ENCODE measurements at regions of chr19 and their contacts with region 1.

Region 1: GRCh38 chr19:18588611-18589379 is at the start of gene REX1BD:
- DNase-seq: peak; percentile 81 to 94 (median 88)
- ATAC-seq: peak; percentile 74 to 78
- H3K4me3 Mint-ChIP-seq: peak within 1 kb of the TSS; percentile 81 to 95 (median 90)
- H3K27ac Mint-ChIP-seq: peak within 1 kb of the TSS; percentile 87 to 96 (median 94)
- H3K4me1 Mint-ChIP-seq: peaks cover 16 to 48% (median 35%) of the 10 kb centered on the region in 4 donors
- H3K27me3 Mint-ChIP-seq: no peaks in the 10 kb centered on the region
- polyA plus RNA-seq, gene REX1BD: 165 to 196 (median 176) TPM

Region 2: DNA sequence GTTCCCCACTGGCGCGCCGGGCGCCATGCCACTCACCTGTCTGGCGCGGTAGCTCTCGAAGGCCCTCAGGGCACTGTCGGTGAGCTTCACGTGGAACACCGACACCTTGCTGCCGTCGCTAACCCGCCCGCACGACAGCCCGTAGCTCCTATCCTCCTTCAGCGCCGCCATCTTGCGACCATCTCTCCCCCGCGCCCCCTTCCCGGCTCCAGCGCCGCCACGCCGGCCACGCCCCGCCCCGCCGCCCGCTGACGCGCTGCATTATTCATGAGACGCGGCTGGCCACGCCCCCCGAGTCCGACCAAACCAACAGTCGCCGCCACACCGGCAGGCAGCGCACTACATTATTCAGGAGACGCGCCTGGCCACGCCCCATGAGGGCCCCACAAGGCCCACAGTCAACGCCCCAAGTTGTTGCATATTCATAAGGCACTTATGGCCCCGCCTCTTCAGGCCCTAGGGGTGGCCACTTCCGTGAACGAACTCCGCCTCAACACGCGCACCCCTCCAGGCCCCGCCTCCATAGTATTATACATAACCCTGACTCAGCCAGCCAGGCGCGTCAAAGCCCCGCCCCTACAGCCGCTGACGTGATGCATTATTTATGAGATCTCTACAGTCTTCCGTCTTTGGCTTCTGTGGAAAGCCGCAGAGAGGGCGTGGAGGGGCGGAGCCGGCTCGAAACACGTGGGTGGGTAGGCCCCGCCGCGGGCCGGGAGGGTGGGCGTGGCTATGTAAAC is 66.7 kb before region 1 on chr19 and contains the start of gene ELL:
- POLR2A ChIA-PET with region 1: interaction called, 44 read pairs
- DNase-seq: peak; percentile 98 to 100 (median 100)
- ATAC-seq: peak; percentile 87
- H3K4me3 Mint-ChIP-seq: peak within 1 kb of the TSS; percentile 86 to 99 (median 94)
- H3K27ac Mint-ChIP-seq: peak within 1 kb of the TSS; percentile 93 to 99 (median 96)
- H3K4me1 Mint-ChIP-seq: peaks cover 7 to 33% (median 25%) of the 10 kb centered on the region in 4 donors
- H3K27me3 Mint-ChIP-seq: no peaks in the 10 kb centered on the region
- polyA plus RNA-seq, gene ELL: 7.6 to 11.0 (median 9.3) TPM

Region 3: DNA sequence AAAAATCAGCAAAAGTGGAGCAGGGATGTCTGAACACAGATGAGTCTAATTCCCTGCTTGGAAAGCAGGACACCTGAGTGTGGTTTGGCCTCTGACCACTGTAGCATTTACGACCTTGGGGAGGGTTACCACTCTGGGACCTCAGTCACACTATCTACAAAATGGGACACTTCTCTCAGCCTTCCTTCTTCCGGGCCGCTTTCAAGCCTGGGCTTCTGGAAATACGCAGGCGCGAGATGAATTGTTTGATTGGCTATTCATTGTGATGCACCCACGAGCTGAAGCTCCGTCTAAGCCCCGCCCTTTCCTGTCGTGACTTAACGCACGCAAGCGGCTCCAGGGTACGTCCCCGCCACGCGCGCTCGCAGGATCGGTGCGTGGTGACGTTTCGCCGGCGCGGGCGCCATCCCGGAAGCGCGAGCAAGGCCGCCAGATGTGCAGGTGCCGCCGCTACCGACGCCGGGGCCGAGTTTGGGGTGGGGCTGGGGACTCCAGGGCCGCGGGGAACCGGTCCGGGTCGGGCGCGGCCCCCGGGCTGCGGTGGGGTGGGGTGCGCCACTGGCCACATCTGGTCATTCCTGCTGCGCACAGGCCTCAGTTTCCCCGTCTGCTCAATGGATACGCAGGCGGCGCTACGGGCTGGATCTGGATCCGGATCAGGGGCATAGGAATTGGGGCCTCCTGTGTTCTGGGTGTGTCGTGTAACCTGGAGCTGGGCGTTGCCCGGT is 31.2 kb before region 1 on chr19 and contains the start of gene KXD1:
- POLR2A ChIA-PET with region 1: interaction called, 44 read pairs
- DNase-seq: peak; percentile 90 to 99 (median 98)
- ATAC-seq: peak; percentile 98 to 99
- H3K4me3 Mint-ChIP-seq: peak within 1 kb of the TSS; percentile 80 to 94 (median 90)
- H3K27ac Mint-ChIP-seq: peak within 1 kb of the TSS; percentile 89 to 99 (median 95)
- H3K4me1 Mint-ChIP-seq: peaks cover 11 to 30% (median 21%) of the 10 kb centered on the region in 4 donors
- H3K27me3 Mint-ChIP-seq: no peaks in the 10 kb centered on the region
- polyA plus RNA-seq, gene KXD1: 68.3 to 80.2 (median 79.4) TPM

Region 4: GRCh38 chr19:18629166-18630088 is 40.6 kb after region 1 on chr19:
- POLR2A ChIA-PET with region 1: no interaction called
- DNase-seq: no peak
- ATAC-seq: no peak
- H3K4me3 Mint-ChIP-seq: no peak overlapping the region
- H3K27ac Mint-ChIP-seq: peak overlapping the region in 3 of 10 donors; percentile 6 to 44 (median 33)
- H3K4me1 Mint-ChIP-seq: peaks cover 0 to under 1% (median 0%) of the 10 kb centered on the region in 4 donors
- H3K27me3 Mint-ChIP-seq: peaks cover 2 to 12% (median 7%) of the 10 kb centered on the region in 5 donors

Region 5: DNA sequence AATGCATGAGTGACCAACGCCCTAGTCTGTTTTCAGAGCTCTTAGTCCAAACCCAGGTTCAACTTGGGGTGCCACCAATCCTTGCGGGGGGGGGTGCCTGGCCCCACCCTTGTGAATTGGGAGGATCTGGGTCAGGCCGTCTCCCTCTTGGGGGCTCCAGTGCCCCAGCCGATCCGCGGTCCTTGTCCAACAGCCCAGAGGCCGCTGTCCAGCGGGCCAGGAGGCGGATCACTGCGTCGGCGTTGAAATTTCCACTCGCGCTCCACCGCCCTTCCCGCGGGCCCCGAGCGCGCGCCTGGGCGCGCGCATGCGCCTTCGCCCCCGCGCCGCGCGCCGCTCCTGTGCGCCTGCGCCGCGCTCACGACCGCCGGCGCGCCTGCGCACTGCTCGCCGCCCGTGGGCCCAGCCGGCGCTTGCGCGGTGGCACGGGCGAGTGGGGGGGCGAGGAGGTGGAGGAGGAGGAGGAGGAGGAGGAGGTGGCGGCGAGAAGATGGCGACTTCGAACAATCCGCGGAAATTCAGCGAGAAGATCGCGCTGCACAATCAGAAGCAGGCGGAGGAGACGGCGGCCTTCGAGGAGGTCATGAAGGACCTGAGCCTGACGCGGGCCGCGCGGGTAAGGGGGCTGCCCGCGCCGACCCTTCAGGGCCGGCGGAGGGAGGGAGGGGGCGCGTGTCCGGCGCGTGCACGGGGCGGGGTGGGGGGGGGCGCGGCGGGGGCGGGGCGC is 94.6 kb after region 1 on chr19 and contains the start of gene CRTC1:
- POLR2A ChIA-PET with region 1: interaction called, 10 read pairs
- DNase-seq: peak; percentile 91 to 96 (median 95)
- ATAC-seq: peak; percentile 86
- H3K4me3 Mint-ChIP-seq: peak within 1 kb of the TSS; percentile 80 to 94 (median 86)
- H3K27ac Mint-ChIP-seq: peak within 1 kb of the TSS; percentile 40 to 96 (median 91)
- H3K4me1 Mint-ChIP-seq: peaks cover 13 to 51% (median 30%) of the 10 kb centered on the region in 4 donors
- H3K27me3 Mint-ChIP-seq: no peaks in the 10 kb centered on the region
- polyA plus RNA-seq, gene CRTC1: 1.2 to 2.0 (median 1.9) TPM

Region 6: GRCh38 chr19:18762125-18763023 is 173.6 kb after region 1 on chr19:
- POLR2A ChIA-PET with region 1: no interaction called
- DNase-seq: no peak
- ATAC-seq: no peak
- H3K4me3 Mint-ChIP-seq: no peak overlapping the region
- H3K27ac Mint-ChIP-seq: no peak overlapping the region
- H3K4me1 Mint-ChIP-seq: peaks cover 0 to 2% (median under 1%) of the 10 kb centered on the region in 4 donors
- H3K27me3 Mint-ChIP-seq: no peaks in the 10 kb centered on the region

Region 7: GRCh38 chr19:18831524-18832305 is 242.9 kb after region 1 on chr19 and contains the start of gene UPF1:
- POLR2A ChIA-PET with region 1: interaction called, 24 read pairs
- DNase-seq: peak; percentile 89 to 99 (median 96)
- ATAC-seq: peak; percentile 81 to 86
- H3K4me3 Mint-ChIP-seq: peak within 1 kb of the TSS; percentile 87 to 96 (median 94)
- H3K27ac Mint-ChIP-seq: peak within 1 kb of the TSS; percentile 75 to 98 (median 93)
- H3K4me1 Mint-ChIP-seq: peaks cover 19 to 42% (median 40%) of the 10 kb centered on the region in 4 donors
- H3K27me3 Mint-ChIP-seq: peaks cover 0 to 5% (median 2%) of the 10 kb centered on the region in 5 donors
- polyA plus RNA-seq, gene UPF1: 7.5 to 28.4 (median 9.5) TPM